ENCODE measurements at regions of chr9 and their contacts with region 1.

Region 1: GRCh38 chr9:134624827-134625181 is 16.8 kb upstream of the COL5A1 start:
- DNase-seq: peak; percentile 87
- ATAC-seq: peak; percentile 93
- H3K4me3 ChIP-seq: no peak overlapping the region
- H3K27ac ChIP-seq: peak overlapping the region; percentile 2; the same call in 1 of the 2 replicates
- H3K4me1 ChIP-seq: peaks cover 27% of the 10 kb centered on the region
- H3K27me3 ChIP-seq: no peaks in the 10 kb centered on the region
- CTCF ChIP-seq: no peak
- POLR2A ChIP-seq: no peak
- RAD21 ChIP-seq: peak; percentile 21

Region 2: GRCh38 chr9:134602547-134603309 is 22.1 kb before region 1 on chr9:
- CTCF ChIA-PET with region 1: no interaction called
- POLR2A ChIA-PET with region 1: no interaction called
- dilution Hi-C with region 1: no loop called
- in situ Hi-C with region 1: no loop called
- intact Hi-C with region 1: loop called (anchors 2 kb)
- DNase-seq: peak; percentile 99
- ATAC-seq: peak; percentile 91
- H3K4me3 ChIP-seq: no peak overlapping the region
- H3K27ac ChIP-seq: peak overlapping the region; percentile 95
- H3K4me1 ChIP-seq: peaks cover 15% of the 10 kb centered on the region
- H3K27me3 ChIP-seq: no peaks in the 10 kb centered on the region
- CTCF ChIP-seq: no peak
- POLR2A ChIP-seq: no peak
- RAD21 ChIP-seq: peak; percentile 31; the same call in 1 of the 2 replicates

Region 3: GRCh38 chr9:134725605-134725940 is 100.8 kb after region 1 on chr9:
- CTCF ChIA-PET with region 1: no interaction called
- POLR2A ChIA-PET with region 1: no interaction called
- dilution Hi-C with region 1: no loop called
- in situ Hi-C with region 1: no loop called
- intact Hi-C with region 1: no loop called
- DNase-seq: peak; percentile 74
- ATAC-seq: peak; percentile 59
- H3K4me3 ChIP-seq: no peak overlapping the region
- H3K27ac ChIP-seq: no peak overlapping the region
- H3K4me1 ChIP-seq: peaks cover 20% of the 10 kb centered on the region
- H3K27me3 ChIP-seq: no peaks in the 10 kb centered on the region
- CTCF ChIP-seq: no peak
- POLR2A ChIP-seq: no peak
- RAD21 ChIP-seq: no peak

Measured in IMR-90 (cell line).